ENCODE measurements at regions of chr11 and their contacts with region 1.

Region 1: GRCh38 chr11:36509694-36510566 is at the start of gene TRAF6:
- DNase-seq: peak; percentile 87
- H3K4me3 Mint-ChIP-seq: peak within 1 kb of the TSS; percentile 99
- H3K27ac Mint-ChIP-seq: peak within 1 kb of the TSS; percentile 98
- H3K4me1 Mint-ChIP-seq: peaks cover 19% of the 10 kb centered on the region
- H3K27me3 Mint-ChIP-seq: no peaks in the 10 kb centered on the region
- CTCF ChIP-seq: peak; percentile 90
- total RNA-seq, gene TRAF6: 9.2 and 12.2 TPM in 2 replicates

Region 2: DNA sequence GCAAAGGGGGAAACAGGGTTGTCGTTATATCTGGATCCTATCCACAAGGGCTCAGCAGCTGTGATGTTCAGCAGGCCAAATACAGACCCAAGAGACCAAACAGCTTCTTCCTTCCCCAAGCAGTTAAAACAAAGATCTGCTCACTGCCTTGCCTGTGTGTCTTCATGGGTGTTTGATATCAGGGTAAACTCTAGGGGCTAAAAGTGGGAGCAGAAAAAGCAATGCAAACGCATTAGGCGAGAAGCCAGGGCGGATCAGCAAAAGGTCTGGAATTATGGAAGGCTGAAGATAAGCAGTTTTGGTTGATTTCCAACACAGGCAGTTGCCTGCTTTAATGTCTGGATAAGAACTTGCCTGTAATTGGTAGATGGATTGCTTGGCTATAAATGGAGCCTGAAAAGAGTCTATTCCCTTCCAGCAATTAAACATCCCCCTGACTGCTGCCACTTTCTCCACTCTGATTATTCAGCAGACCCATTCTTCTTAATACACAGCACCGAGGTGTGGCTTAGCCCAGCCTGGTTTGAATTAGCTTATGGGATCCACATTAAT is 347.0 kb before region 1 on chr11:
- CTCF ChIA-PET with region 1: no interaction called
- POLR2A ChIA-PET with region 1: no interaction called
- intact Hi-C with region 1: no loop called
- DNase-seq: no peak
- H3K4me3 Mint-ChIP-seq: no peak overlapping the region
- H3K27ac Mint-ChIP-seq: no peak overlapping the region
- H3K4me1 Mint-ChIP-seq: peaks cover 15% of the 10 kb centered on the region
- H3K27me3 Mint-ChIP-seq: no peaks in the 10 kb centered on the region
- CTCF ChIP-seq: no peak

Region 3: DNA sequence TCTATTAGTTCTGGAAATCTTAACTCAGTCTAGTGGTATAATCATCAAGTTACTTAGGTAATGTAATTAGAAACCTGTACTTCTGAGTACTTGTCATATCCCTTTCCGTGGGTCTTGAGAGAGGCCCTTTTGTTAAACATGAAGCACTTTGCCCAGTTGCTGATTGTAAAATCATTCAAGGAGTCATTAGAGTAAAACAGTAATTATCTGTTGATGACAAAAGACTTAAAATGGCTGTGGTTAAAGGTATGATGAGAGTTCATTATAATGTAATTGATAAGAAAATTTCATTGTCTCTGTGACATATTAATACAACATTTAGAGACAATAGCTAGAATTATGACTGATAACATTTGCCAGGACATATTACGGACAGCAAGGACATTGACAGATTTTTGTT is 179.5 kb before region 1 on chr11:
- CTCF ChIA-PET with region 1: no interaction called
- POLR2A ChIA-PET with region 1: no interaction called
- intact Hi-C with region 1: no loop called
- DNase-seq: no peak
- H3K4me3 Mint-ChIP-seq: no peak overlapping the region
- H3K27ac Mint-ChIP-seq: no peak overlapping the region
- H3K4me1 Mint-ChIP-seq: peaks cover 18% of the 10 kb centered on the region
- H3K27me3 Mint-ChIP-seq: no peaks in the 10 kb centered on the region
- CTCF ChIP-seq: no peak

Region 4: GRCh38 chr11:36541001-36541400 is 31.1 kb after region 1 on chr11:
- CTCF ChIA-PET with region 1: interaction called, 4 read pairs
- POLR2A ChIA-PET with region 1: no interaction called
- intact Hi-C with region 1: loop called (anchors 1 kb)
- DNase-seq: peak; percentile 57
- H3K4me3 Mint-ChIP-seq: no peak overlapping the region
- H3K27ac Mint-ChIP-seq: no peak overlapping the region
- H3K4me1 Mint-ChIP-seq: no peaks in the 10 kb centered on the region
- H3K27me3 Mint-ChIP-seq: peaks cover 22% of the 10 kb centered on the region
- CTCF ChIP-seq: peak; percentile 33

Region 5: DNA sequence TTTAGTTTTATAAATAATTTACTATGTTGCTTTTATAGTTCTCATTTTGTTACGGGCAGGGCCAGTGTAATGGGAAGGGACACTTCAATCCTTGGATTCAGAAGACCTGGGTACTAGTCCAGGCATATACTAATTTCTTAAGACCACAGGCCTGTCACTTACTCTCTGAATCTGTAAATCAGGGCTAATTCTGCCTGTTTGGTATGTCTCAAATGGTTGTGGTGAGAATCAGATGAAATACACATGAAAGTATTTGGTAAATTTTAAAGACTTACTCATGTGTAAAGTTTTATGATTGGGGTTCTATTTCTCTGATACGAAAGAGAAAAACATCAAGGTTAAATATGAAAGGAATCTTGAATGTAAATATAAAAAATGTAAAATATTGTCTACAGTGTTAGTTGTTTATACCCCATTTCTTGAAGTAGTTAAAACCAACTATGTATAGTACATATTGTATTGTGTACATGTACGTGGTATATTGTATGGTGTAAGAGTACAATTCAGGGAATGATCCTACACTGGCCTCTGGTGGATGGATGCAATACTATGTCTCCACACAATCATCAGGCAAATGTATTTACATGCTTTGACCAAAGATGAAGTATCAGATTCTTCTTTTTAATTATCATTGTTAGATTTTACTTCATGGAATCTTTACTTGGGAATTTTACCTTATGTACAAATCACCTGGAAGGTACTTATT is 112.7 kb after region 1 on chr11:
- CTCF ChIA-PET with region 1: interaction called, 3 read pairs
- POLR2A ChIA-PET with region 1: no interaction called
- intact Hi-C with region 1: loop called (anchors 5 kb)
- DNase-seq: peak; percentile 39
- H3K4me3 Mint-ChIP-seq: no peak overlapping the region
- H3K27ac Mint-ChIP-seq: no peak overlapping the region
- H3K4me1 Mint-ChIP-seq: peaks cover 6% of the 10 kb centered on the region
- H3K27me3 Mint-ChIP-seq: no peaks in the 10 kb centered on the region
- CTCF ChIP-seq: peak; percentile 27

Measured in MCF 10A (cell line).